ENCODE measurements at regions of chr17 and their contacts with region 1.

Region 1: DNA sequence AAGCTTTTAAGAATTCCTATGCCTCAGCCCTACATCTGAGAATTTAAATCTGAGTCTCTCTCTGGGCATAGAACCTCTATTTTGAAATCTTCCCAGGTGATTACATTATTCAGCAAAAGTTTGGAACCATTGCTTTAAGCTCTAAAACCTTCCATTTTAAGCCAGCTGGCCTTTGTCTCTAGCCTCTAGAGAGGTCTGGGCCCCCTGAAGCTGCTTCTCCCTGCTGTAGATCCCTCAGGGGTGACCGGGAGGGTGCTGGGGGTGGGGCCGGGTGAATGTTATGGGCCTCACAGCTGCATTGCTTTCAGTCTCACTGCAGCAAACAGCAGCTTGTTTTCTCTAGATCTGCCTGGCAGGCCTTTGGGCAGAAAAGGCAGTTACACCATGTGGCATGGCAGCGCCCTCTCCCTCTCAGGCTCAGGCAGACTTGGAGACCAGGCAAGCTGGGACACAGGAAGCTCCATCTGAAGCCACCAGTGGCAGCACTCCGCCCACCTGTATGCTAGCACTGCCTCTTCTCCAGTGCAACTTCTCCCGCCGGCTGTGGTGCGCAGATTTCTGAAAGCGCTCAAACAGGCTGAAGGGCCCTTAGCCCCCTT is 66.3 kb downstream of the MPRIP start:
- DNase-seq: peak; percentile 41 to 84
- H3K4me3 ChIP-seq: no peak overlapping the region
- H3K27ac ChIP-seq: peak overlapping the region; percentile 73 to 84
- H3K4me1 ChIP-seq: peaks cover 7 to 99% (median 75%) of the 10 kb centered on the region in 4 donors
- H3K27me3 ChIP-seq: no peaks in the 10 kb centered on the region
- CTCF ChIP-seq: peak in 1 of 2 experiments; percentile 18

Region 2: GRCh38 chr17:17021194-17021863 is 87.2 kb before region 1 on chr17:
- intact Hi-C with region 1: no loop called
- DNase-seq: peak; percentile 65 to 87
- H3K4me3 ChIP-seq: no peak overlapping the region
- H3K27ac ChIP-seq: peak overlapping the region; percentile 78 to 79
- H3K4me1 ChIP-seq: peaks cover 0 to 42% (median 30%) of the 10 kb centered on the region in 4 donors
- H3K27me3 ChIP-seq: no peaks in the 10 kb centered on the region
- CTCF ChIP-seq: no peak

Region 3: GRCh38 chr17:17044846-17045561 is 63.5 kb before region 1 on chr17:
- intact Hi-C with region 1: loop called (anchors 5 kb)
- DNase-seq: peak in 1 of 2 donors; percentile 72
- H3K4me3 ChIP-seq: peak overlapping the region; percentile 60 to 87
- H3K27ac ChIP-seq: peak overlapping the region; percentile 82 to 92
- H3K4me1 ChIP-seq: peaks cover 11 to 75% (median 51%) of the 10 kb centered on the region in 4 donors
- H3K27me3 ChIP-seq: no peaks in the 10 kb centered on the region
- CTCF ChIP-seq: no peak